Activated CD8-positive, alpha-beta T cell treated with anti-CD3 and anti-CD28 coated beads for 36 hours (primary cell): ENCODE measurements at regions of chr1 and their contacts with region 1.

Region 1: GRCh38 chr1:23559136-23559984 is at the start of gene ID3:
- DNase-seq: peak; percentile 98
- ATAC-seq: peak; percentile 71
- H3K4me3 Mint-ChIP-seq: peak within 1 kb of the TSS; percentile 89
- H3K27ac Mint-ChIP-seq: peak within 1 kb of the TSS; percentile 80
- H3K4me1 Mint-ChIP-seq: peaks cover 55% of the 10 kb centered on the region
- H3K27me3 Mint-ChIP-seq: peaks cover 3% of the 10 kb centered on the region
- CTCF ChIP-seq: no peak
- total RNA-seq, gene ID3: 70.4 to 74.3 TPM

Region 2: DNA sequence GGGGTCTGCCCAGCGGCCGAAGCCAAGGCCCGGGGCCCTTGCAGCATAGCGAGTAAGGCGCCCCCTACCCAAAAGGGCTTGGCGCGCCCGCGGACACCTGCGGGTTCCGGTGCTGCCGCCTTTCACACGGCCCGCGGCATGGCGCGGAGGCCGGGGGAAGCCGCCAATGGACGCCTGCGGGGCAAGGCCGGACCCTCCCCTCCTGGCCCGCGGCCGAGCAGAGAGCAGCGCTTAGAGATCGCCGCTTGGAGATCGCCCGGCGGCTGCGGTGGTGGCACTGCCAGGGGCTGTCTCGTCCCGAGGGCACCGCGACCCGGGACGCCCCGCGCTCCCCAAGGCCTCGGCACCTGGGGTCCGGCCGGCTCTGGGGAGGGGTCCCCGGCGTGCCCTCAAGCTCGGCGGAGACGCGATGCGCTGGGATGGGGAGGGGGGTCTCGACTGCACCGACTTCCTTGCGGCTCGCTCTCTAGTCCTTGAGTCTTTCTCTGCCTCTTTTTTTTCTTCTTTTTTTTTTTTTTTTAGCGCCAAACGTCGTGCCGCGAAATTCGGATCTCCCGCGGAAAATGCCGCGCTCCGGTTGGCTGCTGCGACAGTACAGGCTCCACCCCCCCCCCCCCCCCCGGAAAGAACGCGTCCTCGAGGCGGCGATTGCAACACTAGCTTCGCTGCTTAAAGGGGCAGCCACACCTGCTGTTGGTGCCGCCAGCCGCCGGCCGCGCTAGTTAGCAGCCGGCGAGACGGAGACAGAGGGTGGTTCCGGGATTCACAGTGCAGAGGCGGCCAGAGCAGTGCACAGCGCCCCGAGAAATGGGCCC is 28.4 kb before region 1 on chr1 and contains the start of gene E2F2:
- CTCF ChIA-PET with region 1: interaction called, 3 read pairs
- POLR2A ChIA-PET with region 1: interaction called, 16 read pairs
- intact Hi-C with region 1: no loop called
- DNase-seq: peak; percentile 89
- ATAC-seq: peak; percentile 75
- H3K4me3 Mint-ChIP-seq: peak within 1 kb of the TSS; percentile 86
- H3K27ac Mint-ChIP-seq: peak within 1 kb of the TSS; percentile 97
- H3K4me1 Mint-ChIP-seq: peaks cover 59% of the 10 kb centered on the region
- H3K27me3 Mint-ChIP-seq: no peaks in the 10 kb centered on the region
- CTCF ChIP-seq: no peak
- total RNA-seq, gene E2F2: 23.7 to 25.3 TPM

Region 3: DNA sequence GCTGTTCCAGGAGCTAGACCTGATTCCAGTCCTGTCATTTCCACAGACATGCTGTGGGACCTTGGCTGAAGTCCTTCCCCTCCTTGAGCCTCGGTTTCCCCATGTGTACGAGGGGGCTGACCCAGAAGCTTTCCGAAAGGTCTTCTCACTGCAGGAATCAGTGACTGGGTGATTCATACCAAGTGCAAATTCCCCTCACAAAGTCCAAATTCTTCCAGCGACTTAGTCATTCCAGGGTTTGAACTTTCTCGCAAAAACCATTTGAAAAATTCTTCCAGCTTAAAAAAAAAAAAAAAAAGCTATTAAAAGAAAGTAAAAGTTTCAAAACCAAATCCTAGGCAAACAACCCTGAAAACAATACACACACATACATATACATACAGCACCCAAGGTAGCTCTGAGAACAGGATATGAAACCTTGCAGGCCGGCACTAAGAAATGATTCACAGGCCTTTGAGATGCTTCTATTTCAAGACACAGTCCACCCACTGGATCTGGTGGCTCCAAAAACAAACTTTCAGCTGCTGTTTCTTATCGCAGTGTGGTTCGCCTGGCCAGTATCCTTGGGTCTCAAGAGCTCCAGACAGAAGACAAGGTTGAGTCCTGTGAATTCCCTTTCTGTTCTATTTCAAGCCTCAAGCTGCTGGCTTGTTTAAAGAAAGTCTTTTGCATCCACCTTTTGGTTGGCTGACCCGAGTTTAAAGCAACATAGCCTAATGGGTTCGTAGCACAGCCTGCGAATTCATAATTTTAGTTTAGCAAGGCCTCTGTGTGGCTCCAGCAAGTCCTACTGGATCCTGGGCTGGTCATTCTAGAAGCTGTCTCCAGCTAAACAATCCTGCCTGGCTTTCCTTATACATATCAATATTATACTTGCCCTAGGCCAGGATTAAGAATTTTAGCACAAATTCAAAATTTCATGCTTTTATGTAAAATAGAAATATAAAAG is 18.0 kb after region 1 on chr1:
- CTCF ChIA-PET with region 1: interaction called, 51 read pairs
- POLR2A ChIA-PET with region 1: interaction called, 10 read pairs
- intact Hi-C with region 1: no loop called
- DNase-seq: peak; percentile 81
- ATAC-seq: peak; percentile 93
- H3K4me3 Mint-ChIP-seq: peak overlapping the region; percentile 40
- H3K27ac Mint-ChIP-seq: peak overlapping the region; percentile 85
- H3K4me1 Mint-ChIP-seq: peaks cover 59% of the 10 kb centered on the region
- H3K27me3 Mint-ChIP-seq: no peaks in the 10 kb centered on the region
- CTCF ChIP-seq: no peak

Region 4: GRCh38 chr1:23591460-23592208 is 32.3 kb after region 1 on chr1:
- CTCF ChIA-PET with region 1: interaction called, 11 read pairs
- POLR2A ChIA-PET with region 1: interaction called, 40 read pairs
- intact Hi-C with region 1: loop called (anchors 5 kb)
- DNase-seq: peak; percentile 96
- ATAC-seq: peak; percentile 87
- H3K4me3 Mint-ChIP-seq: peak overlapping the region; percentile 21
- H3K27ac Mint-ChIP-seq: peak overlapping the region; percentile 90
- H3K4me1 Mint-ChIP-seq: peaks cover 79% of the 10 kb centered on the region
- H3K27me3 Mint-ChIP-seq: no peaks in the 10 kb centered on the region
- CTCF ChIP-seq: no peak

Region 5: GRCh38 chr1:23598424-23598823 is 39.1 kb after region 1 on chr1:
- CTCF ChIA-PET with region 1: interaction called, 5 read pairs
- POLR2A ChIA-PET with region 1: interaction called, 40 read pairs
- intact Hi-C with region 1: loop called (anchors 5 kb)
- DNase-seq: no peak
- ATAC-seq: no peak
- H3K4me3 Mint-ChIP-seq: no peak overlapping the region
- H3K27ac Mint-ChIP-seq: peak overlapping the region; percentile 34
- H3K4me1 Mint-ChIP-seq: peaks cover 86% of the 10 kb centered on the region
- H3K27me3 Mint-ChIP-seq: no peaks in the 10 kb centered on the region
- CTCF ChIP-seq: no peak

Region 6: DNA sequence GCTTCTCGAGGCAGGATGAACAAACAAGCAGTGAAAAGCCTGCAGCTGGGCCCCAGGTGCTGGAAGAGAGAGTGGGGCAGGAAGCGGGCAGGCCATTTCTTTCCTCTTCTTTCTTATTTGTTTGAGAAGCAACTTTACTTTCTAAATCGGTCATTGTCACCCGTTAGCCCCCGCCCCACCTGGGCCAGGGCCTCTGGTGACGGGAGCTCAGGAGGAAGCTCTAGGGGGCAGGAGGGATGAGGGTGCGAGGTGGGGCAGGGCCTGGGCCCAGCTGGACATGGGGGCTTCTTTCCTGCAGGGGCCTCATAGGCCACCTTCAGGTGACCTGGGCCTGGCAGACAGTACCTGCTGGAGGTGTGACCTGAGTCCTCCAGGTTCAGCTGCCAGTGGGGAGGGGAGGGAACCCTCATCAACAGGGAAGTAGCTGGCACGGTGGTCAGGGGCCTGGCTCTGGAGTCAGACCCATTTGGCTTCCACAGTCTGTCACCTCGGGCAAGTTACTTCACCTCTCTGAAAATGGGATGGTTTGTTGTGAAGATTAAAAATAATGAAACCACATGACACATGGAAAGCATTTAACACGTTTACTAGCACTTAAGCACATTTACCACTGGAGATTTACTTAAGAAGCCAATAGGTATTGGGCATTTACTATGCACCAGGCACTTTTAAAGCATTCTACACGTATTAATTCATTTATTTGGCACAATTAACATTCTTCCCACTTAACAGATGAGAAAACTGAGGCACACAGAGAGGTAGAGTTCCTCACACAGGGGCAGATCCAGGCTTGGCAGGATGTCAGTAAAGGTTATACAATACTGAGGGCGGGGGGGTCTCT is 54.1 kb after region 1 on chr1:
- CTCF ChIA-PET with region 1: interaction called, 5 read pairs
- POLR2A ChIA-PET with region 1: interaction called, 43 read pairs
- intact Hi-C with region 1: no loop called
- DNase-seq: peak; percentile 85
- ATAC-seq: peak; percentile 63
- H3K4me3 Mint-ChIP-seq: peak overlapping the region; percentile 28
- H3K27ac Mint-ChIP-seq: peak overlapping the region; percentile 89
- H3K4me1 Mint-ChIP-seq: peaks cover 69% of the 10 kb centered on the region
- H3K27me3 Mint-ChIP-seq: no peaks in the 10 kb centered on the region
- CTCF ChIP-seq: no peak

Region 7: DNA sequence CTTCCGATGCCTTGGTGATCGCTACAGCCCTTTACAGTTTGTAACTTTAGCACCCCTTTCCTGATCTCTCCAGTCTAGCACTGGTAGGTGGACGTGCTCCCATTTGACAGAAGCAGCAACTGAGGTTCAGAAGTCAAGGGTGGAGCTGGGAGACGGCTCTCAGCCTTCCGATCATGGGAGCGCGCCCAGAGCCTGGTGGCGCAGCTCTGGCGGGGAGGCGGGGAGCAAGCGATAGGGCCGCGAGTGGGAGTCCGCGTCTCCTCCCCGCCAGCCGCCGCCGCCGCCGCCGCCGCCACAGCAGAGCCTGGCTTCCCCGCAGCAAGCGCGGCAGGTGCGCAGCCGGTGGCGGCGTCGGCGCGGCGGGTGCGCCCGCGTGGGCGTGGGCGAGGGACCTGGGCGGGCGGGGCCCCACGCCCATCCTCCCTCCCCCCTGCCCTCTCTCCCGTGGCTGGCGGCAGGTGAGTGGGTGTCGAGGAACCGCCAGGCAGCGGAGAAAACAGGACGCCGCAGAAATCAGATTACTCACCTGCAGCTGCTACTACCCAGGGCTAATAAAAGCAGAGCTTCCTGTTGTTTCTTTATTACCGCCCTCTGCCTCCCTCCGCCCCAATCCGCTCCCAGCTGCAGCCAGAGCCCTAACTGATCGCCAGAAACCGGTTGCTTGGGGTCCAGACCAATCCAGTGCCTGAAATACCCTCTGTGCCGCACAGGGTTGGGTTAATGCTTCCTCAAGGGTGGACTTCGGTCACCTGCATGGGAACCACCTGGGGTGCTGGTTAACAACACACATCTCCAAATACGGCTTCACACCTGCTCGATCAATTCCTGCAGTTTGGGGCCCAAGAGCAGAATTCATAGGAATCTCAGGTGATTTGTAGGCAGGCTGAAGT is 60.2 kb after region 1 on chr1:
- CTCF ChIA-PET with region 1: interaction called, 23 read pairs
- POLR2A ChIA-PET with region 1: interaction called, 43 read pairs
- intact Hi-C with region 1: no loop called
- DNase-seq: peak; percentile 91
- ATAC-seq: peak; percentile 72
- H3K4me3 Mint-ChIP-seq: peak overlapping the region; percentile 68
- H3K27ac Mint-ChIP-seq: peak overlapping the region; percentile 82
- H3K4me1 Mint-ChIP-seq: peaks cover 81% of the 10 kb centered on the region
- H3K27me3 Mint-ChIP-seq: no peaks in the 10 kb centered on the region
- CTCF ChIP-seq: no peak